Ovary (tissue), 10 donors: ENCODE measurements at regions of chr12 and their contacts with region 1.

Region 1: GRCh38 chr12:57213058-57213715 is 3.4 kb upstream of the NXPH4 start:
- DNase-seq: peak; percentile 84 to 92 (median 89)
- H3K4me3 ChIP-seq: no peak overlapping the region
- H3K27ac ChIP-seq: no peak overlapping the region
- H3K4me1 ChIP-seq: peaks cover 8% of the 10 kb centered on the region
- H3K27me3 ChIP-seq: peaks cover 12% of the 10 kb centered on the region
- CTCF ChIP-seq: peak; percentile 76 to 84 (median 81)
- EP300 ChIP-seq: no peak
- POLR2A ChIP-seq: no peak

Region 2: DNA sequence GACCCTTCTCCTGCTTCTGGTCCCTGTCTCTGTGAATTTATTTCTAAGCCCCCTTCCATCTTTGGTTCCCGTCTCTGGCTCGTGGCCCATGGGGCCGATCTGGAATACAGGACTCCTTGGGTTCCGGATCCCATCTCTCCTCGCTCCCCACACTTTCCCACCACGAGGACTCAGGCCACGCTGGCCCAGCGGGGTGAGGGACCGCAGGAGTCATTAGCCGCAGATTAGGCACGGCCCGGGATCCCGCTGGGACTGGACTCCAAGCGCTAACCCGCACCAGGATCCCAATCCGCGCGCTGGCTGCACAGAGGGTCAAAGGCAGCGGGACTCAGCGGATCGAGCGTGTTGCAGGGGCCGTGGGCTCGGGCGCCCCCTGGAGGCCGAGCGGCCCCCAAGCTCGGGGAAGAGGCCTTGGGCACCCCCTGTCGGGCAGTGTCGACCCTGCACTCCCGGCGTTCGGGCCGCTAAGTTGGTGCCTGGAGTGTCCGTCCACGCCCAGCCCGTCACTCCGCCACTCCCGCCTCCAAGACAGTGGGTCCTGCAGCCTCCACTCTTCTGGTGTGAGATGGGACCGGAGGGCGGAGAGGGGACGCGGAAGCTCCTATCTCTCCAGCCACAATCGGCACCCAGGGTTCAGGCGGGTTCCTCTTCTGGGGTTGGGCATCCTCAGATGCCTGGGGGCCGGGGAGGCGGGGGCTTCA is 25.8 kb after region 1 on chr12:
- intact Hi-C with region 1: loop called in 2 of 4 experiments (anchors 1 to 2 kb)
- DNase-seq: peak; percentile 75 to 92 (median 86)
- H3K4me3 ChIP-seq: peak overlapping the region; percentile 26
- H3K27ac ChIP-seq: no peak overlapping the region
- H3K4me1 ChIP-seq: peaks cover 16% of the 10 kb centered on the region
- H3K27me3 ChIP-seq: peaks cover 2% of the 10 kb centered on the region
- CTCF ChIP-seq: peak; percentile 99 to 100 (median 99)
- EP300 ChIP-seq: no peak
- POLR2A ChIP-seq: no peak